B cell (primary cell): ENCODE measurements at regions of chr12 and their contacts with region 1.

Region 1: DNA sequence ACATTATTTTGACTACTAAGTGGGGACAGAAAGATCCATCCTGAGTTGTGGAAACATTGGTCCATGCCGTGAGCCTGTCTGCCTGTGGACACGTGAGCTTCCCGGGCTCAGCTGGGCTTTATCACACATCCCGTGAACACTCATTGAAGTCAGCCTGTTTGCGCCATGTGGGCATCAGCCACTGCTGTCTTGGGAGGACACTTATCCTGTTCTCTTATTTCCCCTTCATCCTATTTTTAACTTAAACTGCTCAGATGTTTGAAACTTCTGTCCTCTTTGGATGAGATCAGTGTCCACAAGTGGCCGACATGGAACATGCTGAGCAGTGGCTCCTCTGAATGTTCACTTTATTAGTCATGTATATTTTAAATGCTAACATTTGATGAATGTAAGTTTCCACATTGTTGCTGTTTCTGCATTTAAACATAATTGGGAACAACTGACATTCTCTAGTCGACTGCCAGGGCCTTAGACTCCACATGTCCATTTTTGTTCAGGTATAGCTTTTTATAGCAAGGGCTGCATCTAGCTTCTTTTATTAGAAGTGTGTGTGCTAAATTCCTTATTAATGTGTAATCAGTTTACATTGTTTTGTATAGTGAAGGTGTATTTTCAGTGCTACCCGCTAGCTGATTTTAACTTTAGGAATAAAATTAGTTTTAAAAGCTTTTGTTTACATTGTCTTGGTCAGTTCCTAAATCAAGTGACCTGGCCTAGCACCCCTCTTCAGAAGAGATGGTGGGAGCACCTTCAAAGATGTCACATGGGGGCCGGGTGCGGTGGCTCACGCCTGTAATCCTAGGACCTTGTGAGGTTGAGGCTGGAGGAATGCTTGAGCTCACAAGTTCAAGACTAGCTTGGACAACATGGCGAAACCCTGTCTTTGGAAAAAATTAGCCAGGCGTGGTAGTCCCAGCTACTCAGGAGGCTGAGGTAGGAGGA is 24.0 kb downstream of the RNF34 start:
- DNase-seq: no peak
- ATAC-seq: no peak
- H3K4me3 ChIP-seq: no peak overlapping the region
- H3K4me3 Mint-ChIP-seq: no peak overlapping the region
- H3K27ac ChIP-seq: no peak overlapping the region
- H3K27ac Mint-ChIP-seq: peak overlapping the region; percentile 59
- H3K4me1 ChIP-seq: peaks cover 12 to 25% of the 10 kb centered on the region in 2 donors
- H3K4me1 Mint-ChIP-seq: peaks cover 20% of the 10 kb centered on the region
- H3K27me3 ChIP-seq: no peaks in the 10 kb centered on the region
- H3K27me3 Mint-ChIP-seq: no peaks in the 10 kb centered on the region
- CTCF ChIP-seq: no peak

Region 2: GRCh38 chr12:121209624-121210572 is 214.1 kb before region 1 on chr12 and contains the start of gene P2RX4:
- CTCF ChIA-PET with region 1: no interaction called
- POLR2A ChIA-PET with region 1: no interaction called
- intact Hi-C with region 1: no loop called
- DNase-seq: peak; percentile 94
- ATAC-seq: peak; percentile 90
- H3K4me3 ChIP-seq: peak within 1 kb of the TSS in 4 of 5 experiments; percentile 70 to 85 (median 76)
- H3K4me3 Mint-ChIP-seq: peak within 1 kb of the TSS; percentile 88
- H3K27ac ChIP-seq: peak within 1 kb of the TSS; percentile 72 to 89
- H3K27ac Mint-ChIP-seq: peak within 1 kb of the TSS; percentile 88
- H3K4me1 ChIP-seq: peaks cover 4 to 13% of the 10 kb centered on the region in 2 donors
- H3K4me1 Mint-ChIP-seq: peaks cover 14% of the 10 kb centered on the region
- H3K27me3 ChIP-seq: no peaks in the 10 kb centered on the region
- H3K27me3 Mint-ChIP-seq: no peaks in the 10 kb centered on the region
- CTCF ChIP-seq: peak; percentile 36
- total RNA-seq, gene P2RX4: 27.2 and 30.4 TPM in 2 replicates

Region 3: DNA sequence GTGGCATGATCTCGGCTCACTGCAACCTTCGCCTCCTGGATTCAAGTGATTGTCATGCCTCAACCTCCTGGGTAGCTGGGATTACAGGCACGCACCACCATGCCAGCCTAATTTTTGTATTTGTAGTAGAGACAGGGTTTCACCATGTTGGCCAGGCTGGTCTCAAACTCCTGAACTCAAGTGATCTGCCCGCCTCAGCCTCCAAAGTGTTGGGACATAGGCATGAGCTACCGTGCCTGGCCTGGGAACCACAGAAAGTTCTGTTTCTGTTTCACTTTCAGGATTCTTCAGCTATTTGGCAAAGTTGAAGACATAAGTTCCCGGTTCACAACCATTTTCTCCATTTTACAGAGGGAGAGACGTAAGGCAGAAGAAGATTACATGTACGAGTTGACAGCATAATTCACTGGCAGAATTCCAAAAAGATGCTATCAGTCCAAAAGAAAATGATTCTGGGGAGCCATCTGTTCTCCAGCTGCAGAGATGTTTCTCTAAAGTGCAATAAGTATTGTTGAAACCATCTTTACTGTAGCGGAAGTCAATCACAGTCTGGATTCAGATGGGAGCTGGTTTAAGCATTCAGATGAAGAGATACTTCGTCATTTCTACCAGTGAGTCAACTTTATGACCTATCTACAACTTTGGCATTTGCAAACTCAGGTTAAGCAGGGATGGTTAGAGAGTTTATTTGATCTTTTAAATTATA is 32.2 kb before region 1 on chr12:
- CTCF ChIA-PET with region 1: no interaction called
- POLR2A ChIA-PET with region 1: no interaction called
- intact Hi-C with region 1: loop called (anchors 5 kb)
- DNase-seq: peak; percentile 44
- ATAC-seq: peak; percentile 31
- H3K4me3 ChIP-seq: peak overlapping the region in 1 of 5 experiments; percentile 44
- H3K4me3 Mint-ChIP-seq: peak overlapping the region; percentile 56
- H3K27ac ChIP-seq: no peak overlapping the region
- H3K27ac Mint-ChIP-seq: peak overlapping the region; percentile 6
- H3K4me1 ChIP-seq: peaks cover 3 to 7% of the 10 kb centered on the region in 2 donors
- H3K4me1 Mint-ChIP-seq: peaks cover 8% of the 10 kb centered on the region
- H3K27me3 ChIP-seq: no peaks in the 10 kb centered on the region
- H3K27me3 Mint-ChIP-seq: no peaks in the 10 kb centered on the region
- CTCF ChIP-seq: no peak

Region 4: GRCh38 chr12:121399391-121400331 is 24.3 kb before region 1 on chr12 and contains the start of gene RNF34:
- CTCF ChIA-PET with region 1: interaction called, 4 read pairs
- POLR2A ChIA-PET with region 1: interaction called, 8 read pairs
- intact Hi-C with region 1: loop called (anchors 2 kb)
- DNase-seq: peak; percentile 99
- ATAC-seq: peak; percentile 94
- H3K4me3 ChIP-seq: peak within 1 kb of the TSS; percentile 79 to 96 (median 82)
- H3K4me3 Mint-ChIP-seq: peak within 1 kb of the TSS; percentile 93
- H3K27ac ChIP-seq: peak within 1 kb of the TSS; percentile 76 to 89
- H3K27ac Mint-ChIP-seq: peak within 1 kb of the TSS; percentile 99
- H3K4me1 ChIP-seq: peaks cover 24 to 25% of the 10 kb centered on the region in 2 donors
- H3K4me1 Mint-ChIP-seq: peaks cover 31% of the 10 kb centered on the region
- H3K27me3 ChIP-seq: no peaks in the 10 kb centered on the region
- H3K27me3 Mint-ChIP-seq: no peaks in the 10 kb centered on the region
- CTCF ChIP-seq: no peak
- total RNA-seq, gene RNF34: 79.6 and 86.7 TPM in 2 replicates

Region 5: GRCh38 chr12:121443193-121443870 is 19.4 kb after region 1 on chr12:
- CTCF ChIA-PET with region 1: interaction called, 48 read pairs
- POLR2A ChIA-PET with region 1: interaction called, 5 read pairs
- intact Hi-C with region 1: no loop called
- DNase-seq: peak; percentile 70
- ATAC-seq: peak; percentile 66
- H3K4me3 ChIP-seq: no peak overlapping the region
- H3K4me3 Mint-ChIP-seq: no peak overlapping the region
- H3K27ac ChIP-seq: no peak overlapping the region
- H3K27ac Mint-ChIP-seq: no peak overlapping the region
- H3K4me1 ChIP-seq: no peaks in the 10 kb centered on the region
- H3K4me1 Mint-ChIP-seq: peaks cover 5% of the 10 kb centered on the region
- H3K27me3 ChIP-seq: no peaks in the 10 kb centered on the region
- H3K27me3 Mint-ChIP-seq: no peaks in the 10 kb centered on the region
- CTCF ChIP-seq: peak; percentile 84